Heart left ventricle (tissue), 16 donors: ENCODE measurements at regions of chr5 and their contacts with region 1.

Region 1: DNA sequence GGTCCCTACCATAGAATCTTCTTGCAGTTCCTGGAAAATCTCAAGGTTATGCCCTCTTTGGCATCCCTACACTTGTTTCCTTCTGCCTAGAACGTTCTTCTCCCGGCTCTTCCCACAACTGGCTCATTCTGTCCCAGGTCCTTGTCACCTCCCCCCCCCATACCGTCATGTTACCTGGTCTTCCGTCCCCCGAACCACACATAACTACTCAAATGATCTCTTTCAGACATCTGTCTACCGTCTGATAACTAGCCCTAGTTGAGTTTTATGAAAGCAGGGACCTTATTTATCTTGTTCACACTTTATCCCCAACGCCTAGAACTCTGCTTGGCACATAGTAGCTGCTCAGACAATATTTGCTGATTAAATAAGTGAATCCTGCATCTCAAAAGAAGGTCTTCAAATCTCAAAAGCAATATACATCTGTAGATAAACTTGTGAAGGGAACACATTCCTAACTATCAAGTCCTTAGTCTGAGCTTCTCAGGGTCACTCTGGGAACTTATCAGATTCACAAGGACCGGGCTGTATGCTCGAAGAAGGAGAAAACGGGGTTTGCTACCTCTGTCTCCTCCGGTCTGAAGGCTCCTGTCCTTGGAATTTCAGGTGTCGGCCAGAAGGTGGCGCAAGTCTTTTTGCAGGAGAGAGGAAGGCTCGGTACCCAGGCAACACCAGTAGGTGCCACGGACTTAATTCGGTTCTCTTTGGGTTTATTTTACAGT is 30.0 kb downstream of the LCP2 start:
- DNase-seq: peak; percentile 73 to 83 (median 78)
- ATAC-seq: peak; percentile 57 to 75 (median 70)
- H3K4me3 ChIP-seq: peak overlapping the region in 4 of 12 donors; percentile 4 to 34 (median 6)
- H3K27ac ChIP-seq: peak overlapping the region in 5 of 12 donors; percentile 6 to 94 (median 47)
- H3K4me1 ChIP-seq: peaks cover 0 to 89% (median 10%) of the 10 kb centered on the region in 12 donors
- H3K27me3 ChIP-seq: peaks cover 0 to 5% (median 0%) of the 10 kb centered on the region in 9 donors
- CTCF ChIP-seq: peak; percentile 71 to 90 (median 84)
- POLR2A ChIP-seq: no peak

Region 2: GRCh38 chr5:170333161-170333910 is 65.7 kb after region 1 on chr5:
- intact Hi-C with region 1: loop called in 5 of 10 experiments (anchors 5 to 10 kb)
- DNase-seq: no peak
- ATAC-seq: peak in 3 of 4 donors; percentile 12 to 19 (median 18)
- H3K4me3 ChIP-seq: peak overlapping the region in 1 of 12 donors; percentile 21
- H3K27ac ChIP-seq: peak overlapping the region in 2 of 12 donors; percentile 18 to 90
- H3K4me1 ChIP-seq: peaks cover 0 to 93% (median 13%) of the 10 kb centered on the region in 12 donors
- H3K27me3 ChIP-seq: no peaks in the 10 kb centered on the region
- CTCF ChIP-seq: no peak
- POLR2A ChIP-seq: no peak

Region 3: GRCh38 chr5:170348137-170348633 is 80.6 kb after region 1 on chr5:
- intact Hi-C with region 1: loop called in 5 of 10 experiments (anchors 2 to 5 kb)
- DNase-seq: no peak
- ATAC-seq: peak in 3 of 4 donors; percentile 23 to 36 (median 31)
- H3K4me3 ChIP-seq: peak overlapping the region in 1 of 12 donors; percentile 12
- H3K27ac ChIP-seq: peak overlapping the region in 4 of 12 donors; percentile 8 to 43 (median 28)
- H3K4me1 ChIP-seq: peaks cover 0 to 23% (median 6%) of the 10 kb centered on the region in 12 donors
- H3K27me3 ChIP-seq: peaks cover 0 to 23% (median 4%) of the 10 kb centered on the region in 9 donors
- CTCF ChIP-seq: peak in 9 of 12 donors; percentile 5 to 53 (median 37)
- POLR2A ChIP-seq: no peak

Region 4: DNA sequence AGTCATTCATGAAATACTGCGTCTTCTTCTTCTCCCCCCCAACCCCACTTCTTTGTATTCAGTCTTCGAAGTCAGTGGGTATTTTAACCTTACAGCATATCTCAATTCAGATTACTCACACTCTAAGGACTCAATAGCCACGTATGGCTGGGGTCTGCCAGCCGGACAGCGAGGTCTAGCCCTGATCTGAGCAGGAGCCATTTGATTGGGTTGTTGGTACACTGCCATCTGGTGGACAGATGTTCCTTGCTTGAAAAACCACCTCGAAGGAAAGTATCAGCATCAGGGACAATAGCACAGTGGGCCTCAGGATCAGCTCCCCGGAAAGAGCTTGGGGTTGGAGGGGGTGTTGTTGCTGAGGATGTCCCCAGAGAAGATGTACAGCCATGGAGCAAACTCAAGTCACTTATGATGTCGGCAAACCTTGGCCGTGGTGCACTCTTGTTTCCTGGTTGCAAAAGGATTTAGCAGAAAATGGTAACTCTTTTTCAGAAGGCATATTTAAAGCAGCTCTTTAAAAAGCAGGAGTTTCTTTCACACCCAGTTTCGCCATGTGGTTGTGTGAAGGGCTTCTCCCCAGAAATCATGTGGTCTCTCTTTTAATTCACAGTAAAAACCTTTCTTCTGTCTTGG is 153.3 kb after region 1 on chr5:
- intact Hi-C with region 1: loop called (anchors 1 to 5 kb)
- DNase-seq: peak in 4 of 5 donors; percentile 55 to 63 (median 59)
- ATAC-seq: peak in 3 of 4 donors; percentile 67 to 83 (median 76)
- H3K4me3 ChIP-seq: no peak overlapping the region
- H3K27ac ChIP-seq: peak overlapping the region in 1 of 12 donors; percentile 14
- H3K4me1 ChIP-seq: peaks cover 0 to 34% (median 2%) of the 10 kb centered on the region in 12 donors
- H3K27me3 ChIP-seq: no peaks in the 10 kb centered on the region
- CTCF ChIP-seq: peak; percentile 63 to 86 (median 78)
- POLR2A ChIP-seq: no peak

Region 5: GRCh38 chr5:170638454-170639220 is 371.0 kb after region 1 on chr5:
- intact Hi-C with region 1: loop called in 4 of 10 experiments (anchors 5 to 10 kb)
- DNase-seq: peak; percentile 52 to 81 (median 62)
- ATAC-seq: peak; percentile 18 to 82 (median 67)
- H3K4me3 ChIP-seq: no peak overlapping the region
- H3K27ac ChIP-seq: no peak overlapping the region
- H3K4me1 ChIP-seq: peaks cover 0 to 16% (median 11%) of the 10 kb centered on the region in 12 donors
- H3K27me3 ChIP-seq: peaks cover 0 to 3% (median 0%) of the 10 kb centered on the region in 9 donors
- CTCF ChIP-seq: peak; percentile 78 to 94 (median 88)
- POLR2A ChIP-seq: no peak